ENCODE measurements at regions of chr7 and their contacts with region 1.

Region 1: DNA sequence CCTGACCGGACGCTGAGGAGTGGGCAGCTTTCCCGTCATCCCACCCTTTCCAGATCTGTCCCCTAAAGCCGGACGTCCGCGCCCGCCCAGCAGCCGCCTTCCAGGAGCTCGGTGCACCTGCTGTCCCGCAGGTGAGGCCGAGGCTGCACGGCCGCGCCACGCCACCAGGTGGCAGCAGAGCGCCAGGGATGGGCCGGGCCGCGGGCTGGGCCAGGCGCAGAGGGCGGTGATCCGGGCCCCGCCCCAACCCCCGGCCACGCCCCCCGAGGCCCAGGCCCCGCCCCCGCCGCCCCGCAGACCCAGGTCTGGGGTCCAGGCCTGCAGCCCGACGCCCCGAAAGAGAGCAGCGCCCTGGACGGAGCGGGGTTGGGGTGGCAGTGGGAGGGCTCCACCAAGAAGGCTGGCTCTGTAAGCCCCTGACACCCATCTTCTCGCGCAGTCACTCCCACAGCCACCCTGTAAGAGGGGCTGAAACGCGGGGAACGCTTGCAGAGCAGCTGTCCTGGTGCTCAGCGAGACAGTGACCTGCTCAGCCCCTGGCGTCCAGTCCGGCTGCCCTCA is 32.2 kb downstream of the FOXL3 start:
- DNase-seq: peak; percentile 76 to 87 (median 84)
- H3K4me3 ChIP-seq: no peak overlapping the region
- H3K4me3 Mint-ChIP-seq: peak overlapping the region in 1 of 7 donors; percentile 23
- H3K27ac ChIP-seq: no peak overlapping the region
- H3K27ac Mint-ChIP-seq: no peak overlapping the region
- H3K4me1 ChIP-seq: no peaks in the 10 kb centered on the region
- H3K4me1 Mint-ChIP-seq: peaks cover 0 to 6% (median 0%) of the 10 kb centered on the region in 3 donors
- H3K27me3 ChIP-seq: peaks cover 17% of the 10 kb centered on the region
- H3K27me3 Mint-ChIP-seq: peaks cover 12 to 39% of the 10 kb centered on the region in 2 donors

Region 2: GRCh38 chr7:636396-636795 is 314.2 kb after region 1 on chr7:
- CTCF ChIA-PET with region 1: interaction called, 12 read pairs
- POLR2A ChIA-PET with region 1: no interaction called
- DNase-seq: peak; percentile 38 to 72 (median 47)
- H3K4me3 ChIP-seq: no peak overlapping the region
- H3K4me3 Mint-ChIP-seq: peak overlapping the region in 1 of 7 donors; percentile 61
- H3K27ac ChIP-seq: peak overlapping the region; percentile 47
- H3K27ac Mint-ChIP-seq: peak overlapping the region in 3 of 8 donors; percentile 47 to 68 (median 63)
- H3K4me1 ChIP-seq: no peaks in the 10 kb centered on the region
- H3K4me1 Mint-ChIP-seq: peaks cover 8 to 14% (median 10%) of the 10 kb centered on the region in 3 donors
- H3K27me3 ChIP-seq: no peaks in the 10 kb centered on the region
- H3K27me3 Mint-ChIP-seq: no peaks in the 10 kb centered on the region

Region 3: DNA sequence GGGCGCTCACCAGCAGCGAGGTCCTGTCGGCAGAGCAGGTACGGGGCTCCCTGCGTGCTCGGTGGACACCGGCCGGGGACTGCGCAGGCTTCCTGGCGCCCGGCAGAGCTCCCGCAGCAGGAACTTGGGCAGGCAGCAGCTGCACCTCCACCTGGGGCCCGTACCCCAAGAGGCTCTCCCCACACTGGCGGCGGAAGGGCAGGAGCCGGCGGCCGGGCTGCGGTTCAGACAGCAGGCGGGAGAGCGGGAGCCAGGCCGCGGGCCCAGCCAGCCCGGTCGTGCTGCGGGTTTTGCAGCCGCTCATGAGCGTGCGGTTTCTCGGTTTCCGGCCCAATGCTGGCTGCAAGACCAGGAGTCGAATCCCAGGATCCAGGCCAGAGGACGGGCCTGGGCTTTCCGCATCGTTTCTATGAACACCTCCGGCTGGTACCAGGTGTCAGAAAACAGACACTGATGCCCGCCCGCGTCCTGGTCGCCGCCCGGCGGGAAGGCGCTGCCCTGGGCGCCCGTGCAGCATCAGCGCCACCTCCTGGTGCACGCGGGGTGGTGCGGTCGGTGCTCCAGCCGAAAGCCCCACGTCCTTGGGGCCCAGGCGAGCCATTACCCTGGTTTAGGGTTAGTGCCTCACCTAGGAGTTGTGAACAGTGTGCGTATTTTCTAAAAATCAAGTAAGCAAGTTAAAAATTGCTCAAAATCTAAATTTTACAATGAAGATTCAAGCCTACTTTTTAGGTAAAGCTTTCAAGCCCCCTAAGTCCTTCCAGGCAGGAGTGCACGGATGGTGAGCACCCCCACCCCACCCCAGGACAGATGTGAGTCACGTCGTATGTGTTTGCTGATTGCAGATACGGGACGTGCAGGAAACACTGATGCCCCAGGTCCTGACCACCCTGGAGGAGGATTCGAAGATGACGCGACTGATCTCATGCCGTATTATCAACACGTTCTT is 452.2 kb after region 1 on chr7:
- CTCF ChIA-PET with region 1: interaction called, 13 read pairs
- POLR2A ChIA-PET with region 1: no interaction called
- DNase-seq: peak; percentile 42 to 64 (median 55)
- H3K4me3 ChIP-seq: no peak overlapping the region
- H3K4me3 Mint-ChIP-seq: no peak overlapping the region
- H3K27ac ChIP-seq: no peak overlapping the region
- H3K27ac Mint-ChIP-seq: no peak overlapping the region
- H3K4me1 ChIP-seq: no peaks in the 10 kb centered on the region
- H3K4me1 Mint-ChIP-seq: no peaks in the 10 kb centered on the region
- H3K27me3 ChIP-seq: no peaks in the 10 kb centered on the region
- H3K27me3 Mint-ChIP-seq: no peaks in the 10 kb centered on the region

Region 4: GRCh38 chr7:873367-874002 is 551.3 kb after region 1 on chr7:
- CTCF ChIA-PET with region 1: interaction called, 16 read pairs
- POLR2A ChIA-PET with region 1: no interaction called
- DNase-seq: peak; percentile 49 to 73 (median 64)
- H3K4me3 ChIP-seq: no peak overlapping the region
- H3K4me3 Mint-ChIP-seq: peak overlapping the region in 2 of 7 donors; percentile 62 to 78
- H3K27ac ChIP-seq: no peak overlapping the region
- H3K27ac Mint-ChIP-seq: peak overlapping the region in 6 of 8 donors; percentile 7 to 93 (median 52)
- H3K4me1 ChIP-seq: peaks cover 24% of the 10 kb centered on the region
- H3K4me1 Mint-ChIP-seq: peaks cover 14 to 16% (median 16%) of the 10 kb centered on the region in 3 donors
- H3K27me3 ChIP-seq: no peaks in the 10 kb centered on the region
- H3K27me3 Mint-ChIP-seq: no peaks in the 10 kb centered on the region

Measured in CD8-positive, alpha-beta memory T cell (primary cell).